ENCODE measurements at regions of chr2 and their contacts with region 1.

Region 1: DNA sequence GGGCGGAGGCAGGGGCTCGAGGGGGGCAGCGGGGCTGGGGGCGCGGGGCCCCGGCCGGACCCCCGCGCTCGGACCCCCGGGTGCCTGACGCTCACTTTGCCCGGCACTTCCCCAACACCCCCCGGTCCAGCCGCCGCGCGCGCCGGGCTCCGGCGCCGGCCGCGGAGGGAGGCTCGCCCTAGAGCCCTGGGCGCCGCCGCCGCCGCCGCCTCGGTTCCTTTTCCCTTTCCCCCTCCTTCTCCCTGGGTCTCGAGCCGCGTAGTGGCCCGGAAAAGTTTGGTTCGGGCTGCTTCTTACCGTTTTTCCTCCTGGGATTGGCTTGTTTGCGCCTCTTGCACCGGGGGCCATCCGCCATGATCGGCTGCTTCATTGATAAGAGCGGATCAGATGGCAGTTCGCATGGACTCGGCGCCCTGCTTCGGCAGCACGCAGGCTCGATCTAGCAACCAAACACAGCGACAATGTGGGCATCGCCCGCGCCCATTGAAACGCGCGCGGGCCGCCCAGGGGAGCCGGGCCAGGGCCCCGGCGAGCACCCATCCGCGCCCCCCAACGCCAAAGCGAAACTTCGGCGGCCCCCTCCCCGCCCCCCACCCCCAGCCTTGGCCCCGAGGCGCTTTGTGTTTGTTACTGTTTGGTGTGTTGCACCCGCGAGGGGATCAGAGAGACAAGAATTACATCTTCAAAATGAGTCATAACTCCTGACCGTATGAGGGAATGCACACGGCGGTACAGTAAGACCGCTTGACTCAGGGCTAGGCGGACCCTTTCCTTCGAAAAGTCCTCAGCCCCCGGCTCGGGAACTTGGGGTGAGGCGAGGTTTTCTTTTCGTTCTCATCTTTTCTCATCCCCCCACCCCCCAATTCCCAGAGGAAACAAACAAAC is 2.7 kb downstream of the ZEB2 start:
- DNase-seq: peak; percentile 84

Region 2: DNA sequence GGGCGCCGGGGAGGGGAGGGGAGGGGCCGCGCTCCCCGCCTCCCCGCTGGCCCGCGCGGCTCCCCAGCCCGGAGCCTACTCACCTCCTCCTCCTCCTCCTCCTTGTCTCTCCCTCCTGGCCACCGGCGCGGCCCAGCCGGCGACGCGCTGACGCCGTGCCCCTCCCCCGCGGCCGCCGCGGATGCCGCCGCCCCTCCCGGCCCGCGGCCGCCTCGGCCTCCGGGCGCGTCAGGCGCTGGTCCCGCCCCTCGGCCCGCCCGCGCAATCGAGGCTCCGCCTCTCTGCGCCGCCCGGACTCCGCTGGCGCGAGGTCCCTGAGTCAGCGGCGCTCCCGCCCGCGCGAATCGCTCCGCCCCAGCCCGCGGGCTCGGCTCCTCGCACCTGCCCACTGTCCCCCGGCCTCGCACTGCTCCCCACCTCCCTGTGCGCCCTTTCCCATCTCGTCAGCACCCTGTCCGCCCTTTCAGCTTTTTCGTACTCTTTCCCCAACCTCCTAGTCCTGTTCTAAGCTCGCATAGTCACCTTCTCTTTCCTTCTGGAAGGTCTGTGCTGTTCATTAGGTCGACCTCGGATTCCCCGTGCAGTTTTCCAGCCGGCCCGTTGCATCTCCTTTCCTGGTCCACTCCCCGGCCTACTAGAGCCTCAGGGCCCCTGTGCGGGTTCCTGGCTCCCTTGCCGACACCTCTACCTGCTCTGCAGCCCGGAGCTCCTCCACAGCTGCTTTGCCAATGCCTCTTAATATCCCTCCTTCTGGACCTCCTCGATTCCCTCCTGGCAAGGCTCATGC is 184.7 kb before region 1 on chr2:
- intact Hi-C with region 1: loop called (anchors 2 kb)
- DNase-seq: peak; percentile 96

Region 3: GRCh38 chr2:144937910-144938709 is 420.9 kb after region 1 on chr2:
- intact Hi-C with region 1: loop called (anchors 5 kb)
- DNase-seq: no peak

Region 4: DNA sequence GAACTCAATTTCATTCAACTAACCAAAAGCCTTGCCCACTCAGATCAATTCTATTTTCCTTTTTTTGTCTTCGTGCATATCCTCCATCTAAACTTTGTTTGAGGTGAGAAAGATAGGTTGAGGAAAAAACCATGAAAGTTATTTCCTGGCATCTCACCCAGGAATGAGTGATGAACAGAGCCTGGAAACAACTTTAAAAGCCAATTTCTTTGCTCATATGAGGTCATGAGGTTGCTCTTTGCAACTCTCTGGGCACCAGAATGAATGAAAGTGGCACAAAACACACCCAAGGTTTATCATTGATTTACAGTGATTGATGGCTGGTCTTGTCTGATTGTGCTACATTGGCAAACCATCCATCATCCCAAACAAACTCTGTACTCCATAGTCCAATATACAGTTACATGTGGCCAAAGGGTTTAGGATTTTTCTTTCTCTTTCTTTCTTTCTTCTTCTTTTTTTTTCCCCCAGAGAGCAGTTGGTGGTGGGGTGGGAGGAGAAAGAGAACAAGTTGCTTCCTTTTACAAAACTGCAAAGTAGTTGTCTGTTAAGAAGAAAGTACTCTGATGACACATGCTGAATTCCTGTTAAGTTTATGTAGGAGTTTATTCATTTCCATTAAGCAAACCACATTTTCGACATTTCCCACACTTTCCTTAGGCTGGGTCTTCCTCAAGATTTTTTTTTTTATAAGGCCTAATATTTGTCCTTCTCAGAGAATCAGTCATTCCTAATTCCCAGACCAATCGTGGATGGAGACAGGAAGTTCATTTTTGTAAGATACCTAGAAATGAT is 578.6 kb after region 1 on chr2:
- intact Hi-C with region 1: loop called (anchors 10 kb)
- DNase-seq: no peak

Region 5: GRCh38 chr2:145623136-145623535 is 1105.9 kb after region 1 on chr2:
- intact Hi-C with region 1: no loop called
- DNase-seq: no peak

Region 6: GRCh38 chr2:145752091-145752806 is 1235.0 kb after region 1 on chr2:
- intact Hi-C with region 1: loop called (anchors 10 kb)
- DNase-seq: no peak